Activated CD4-positive, alpha-beta memory T cell treated with anti-CD3 and anti-CD28 coated beads for 36 hours (primary cell): ENCODE measurements at regions of chr10 and their contacts with region 1.

Region 1: DNA sequence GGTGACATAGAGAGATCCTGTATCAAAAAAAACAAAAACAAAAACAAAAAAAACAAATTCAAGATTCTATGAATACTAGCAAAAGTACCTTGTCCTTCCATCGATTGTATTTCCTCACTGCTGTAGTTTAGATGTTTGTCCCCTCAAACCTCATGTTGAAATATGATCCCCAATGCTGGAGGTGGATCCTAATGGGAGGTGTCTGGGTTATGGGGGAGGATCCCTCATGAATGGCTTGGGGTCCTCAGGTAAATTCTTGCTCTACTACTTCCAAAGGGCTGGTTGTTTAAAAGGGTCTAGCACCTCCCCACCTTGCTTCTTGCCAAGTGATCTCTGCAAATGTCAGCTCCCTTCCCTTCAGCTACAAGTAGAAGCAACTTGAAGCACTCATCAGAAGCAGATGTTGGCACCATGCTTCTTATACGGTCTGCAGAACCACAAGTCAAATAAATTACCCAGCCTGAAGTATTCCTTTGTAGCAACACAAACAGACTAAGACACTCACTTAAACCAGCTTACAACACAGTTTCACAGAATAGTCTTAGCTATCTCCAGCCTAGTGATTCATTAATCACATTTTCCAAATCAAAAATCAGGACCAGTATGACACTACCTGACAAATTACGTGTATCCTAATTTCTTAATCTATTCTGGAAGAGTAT is 20.7 kb downstream of the ABI1 start:
- DNase-seq: no peak
- H3K4me3 Mint-ChIP-seq: no peak overlapping the region
- H3K27ac Mint-ChIP-seq: peak overlapping the region; percentile 30
- H3K4me1 Mint-ChIP-seq: peaks cover 69% of the 10 kb centered on the region
- H3K27me3 Mint-ChIP-seq: no peaks in the 10 kb centered on the region

Region 2: GRCh38 chr10:25849988-25850387 is 990.1 kb before region 1 on chr10:
- CTCF ChIA-PET with region 1: no interaction called
- POLR2A ChIA-PET with region 1: no interaction called
- intact Hi-C with region 1: no loop called
- DNase-seq: no peak
- H3K4me3 Mint-ChIP-seq: no peak overlapping the region
- H3K27ac Mint-ChIP-seq: no peak overlapping the region
- H3K4me1 Mint-ChIP-seq: no peaks in the 10 kb centered on the region
- H3K27me3 Mint-ChIP-seq: peaks cover 5% of the 10 kb centered on the region

Region 3: DNA sequence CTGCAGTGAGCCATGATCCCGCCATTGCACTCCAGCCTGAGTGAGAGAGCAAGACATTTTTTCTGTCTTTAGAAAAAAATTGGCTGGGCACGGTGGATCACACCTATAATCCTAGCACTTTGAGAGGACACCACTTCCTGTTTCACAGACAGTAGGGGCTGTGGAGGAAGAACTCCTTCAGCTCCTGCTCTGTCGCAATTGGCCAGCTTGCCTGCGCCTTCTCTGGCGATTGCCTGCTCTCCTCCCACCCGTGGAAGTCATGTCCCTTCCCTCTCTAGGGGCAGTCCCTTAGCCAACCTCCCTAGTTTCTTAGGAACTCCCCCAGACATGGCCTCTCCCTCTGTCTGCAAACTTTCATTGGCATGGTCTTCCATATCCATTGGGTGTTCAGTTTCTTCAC is 133.9 kb before region 1 on chr10:
- CTCF ChIA-PET with region 1: no interaction called
- POLR2A ChIA-PET with region 1: no interaction called
- intact Hi-C with region 1: no loop called
- DNase-seq: no peak
- H3K4me3 Mint-ChIP-seq: no peak overlapping the region
- H3K27ac Mint-ChIP-seq: no peak overlapping the region
- H3K4me1 Mint-ChIP-seq: peaks cover 4% of the 10 kb centered on the region
- H3K27me3 Mint-ChIP-seq: no peaks in the 10 kb centered on the region

Region 4: GRCh38 chr10:26805567-26806245 is 34.4 kb before region 1 on chr10:
- CTCF ChIA-PET with region 1: no interaction called
- POLR2A ChIA-PET with region 1: no interaction called
- intact Hi-C with region 1: loop called (anchors 5 kb)
- DNase-seq: no peak
- H3K4me3 Mint-ChIP-seq: no peak overlapping the region
- H3K27ac Mint-ChIP-seq: no peak overlapping the region
- H3K4me1 Mint-ChIP-seq: peaks cover 73% of the 10 kb centered on the region
- H3K27me3 Mint-ChIP-seq: no peaks in the 10 kb centered on the region